ENCODE measurements at regions of chr12 and their contacts with region 1.

Region 1: GRCh38 chr12:51424662-51425438 is at the start of gene SLC4A8:
- DNase-seq: peak; percentile 82 to 97 (median 94)
- ATAC-seq: peak; percentile 99
- H3K4me3 ChIP-seq: peak within 1 kb of the TSS; percentile 16; the same call in 1 of the 2 replicates
- H3K27ac ChIP-seq: no peak within 1 kb of the TSS
- H3K4me1 ChIP-seq: peaks cover 0 to 9% of the 10 kb centered on the region in 2 experiments; a peak in 2 of 5 replicates
- H3K27me3 ChIP-seq: peaks cover 13 to 17% of the 10 kb centered on the region in 2 experiments; a peak in 4 of 5 replicates
- CTCF ChIP-seq: peak; percentile 66 to 81 (median 79)
- EP300 ChIP-seq: no peak
- POLR2A ChIP-seq: no peak
- RAD21 ChIP-seq: peak; percentile 53 to 70
- polyA plus RNA-seq, gene SLC4A8: 0.06 TPM in 1 of 2 experiments, not detected in the other

Region 2: GRCh38 chr12:51118706-51119105 is 306.1 kb before region 1 on chr12:
- CTCF ChIA-PET with region 1: no interaction called
- POLR2A ChIA-PET with region 1: no interaction called
- in situ Hi-C with region 1: no loop called
- intact Hi-C with region 1: no loop called
- DNase-seq: no peak
- ATAC-seq: no peak
- H3K4me3 ChIP-seq: no peak overlapping the region
- H3K27ac ChIP-seq: no peak overlapping the region
- H3K4me1 ChIP-seq: no peaks in the 10 kb centered on the region
- H3K27me3 ChIP-seq: no peaks in the 10 kb centered on the region
- CTCF ChIP-seq: no peak
- EP300 ChIP-seq: no peak
- POLR2A ChIP-seq: no peak
- RAD21 ChIP-seq: no peak

Region 3: GRCh38 chr12:51368640-51369517 is 56.0 kb before region 1 on chr12:
- CTCF ChIA-PET with region 1: no interaction called
- POLR2A ChIA-PET with region 1: no interaction called
- in situ Hi-C with region 1: no loop called
- intact Hi-C with region 1: no loop called
- DNase-seq: peak; percentile 80 to 87 (median 82)
- ATAC-seq: peak; percentile 90
- H3K4me3 ChIP-seq: no peak overlapping the region
- H3K27ac ChIP-seq: no peak overlapping the region
- H3K4me1 ChIP-seq: peaks cover 12 to 20% of the 10 kb centered on the region in 2 experiments
- H3K27me3 ChIP-seq: no peaks in the 10 kb centered on the region
- CTCF ChIP-seq: no peak
- EP300 ChIP-seq: peak; percentile 74
- POLR2A ChIP-seq: no peak
- RAD21 ChIP-seq: no peak; a peak in 1 of 4 replicates

Region 4: DNA sequence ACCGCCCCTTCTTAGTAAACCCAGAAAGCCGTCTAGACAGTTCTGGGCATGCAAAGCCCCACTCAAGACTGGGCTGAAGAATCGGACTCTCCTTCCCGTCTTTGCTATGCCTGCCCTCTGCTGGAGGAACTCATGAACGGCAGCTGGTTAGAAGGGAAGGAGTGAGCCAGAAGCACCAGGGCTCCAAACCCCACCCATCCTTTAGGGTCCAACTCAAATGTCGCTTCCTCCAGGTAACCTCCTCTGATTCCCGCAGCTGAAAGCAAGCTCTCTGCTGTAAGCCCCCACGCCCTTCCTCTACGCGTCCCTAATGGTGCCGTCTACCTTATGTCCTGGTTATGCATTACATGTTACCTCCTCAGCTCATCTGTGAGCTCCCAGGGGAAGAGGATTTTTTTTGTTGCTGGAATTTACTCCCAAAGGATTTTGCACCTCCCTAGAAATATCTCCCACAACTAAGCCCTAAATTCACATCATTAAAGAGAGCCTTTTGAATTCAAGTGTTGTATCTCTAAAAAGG is 107.2 kb after region 1 on chr12:
- CTCF ChIA-PET with region 1: interaction called, 19 read pairs
- POLR2A ChIA-PET with region 1: interaction called, 4 read pairs
- in situ Hi-C with region 1: no loop called
- intact Hi-C with region 1: loop called (anchors 1 kb)
- DNase-seq: peak; percentile 75 to 80 (median 80)
- ATAC-seq: peak; percentile 97
- H3K4me3 ChIP-seq: no peak overlapping the region
- H3K27ac ChIP-seq: no peak overlapping the region
- H3K4me1 ChIP-seq: no peaks in the 10 kb centered on the region
- H3K27me3 ChIP-seq: peaks cover 5 to 36% of the 10 kb centered on the region in 2 experiments; a peak in 3 of 5 replicates
- CTCF ChIP-seq: peak; percentile 85 to 88 (median 85)
- EP300 ChIP-seq: no peak
- POLR2A ChIP-seq: no peak
- RAD21 ChIP-seq: peak; percentile 69 to 84

Region 5: GRCh38 chr12:51678086-51678724 is 253.4 kb after region 1 on chr12:
- CTCF ChIA-PET with region 1: interaction called, 3 read pairs
- POLR2A ChIA-PET with region 1: interaction called, 3 read pairs
- in situ Hi-C with region 1: no loop called
- intact Hi-C with region 1: loop called (anchors 2 kb)
- DNase-seq: peak; percentile 52 to 66 (median 59)
- ATAC-seq: peak; percentile 96
- H3K4me3 ChIP-seq: no peak overlapping the region
- H3K27ac ChIP-seq: no peak overlapping the region
- H3K4me1 ChIP-seq: no peaks in the 10 kb centered on the region
- H3K27me3 ChIP-seq: peaks cover 0 to 7% of the 10 kb centered on the region in 2 experiments; a peak in 2 of 5 replicates
- CTCF ChIP-seq: peak; percentile 73 to 79 (median 76)
- EP300 ChIP-seq: no peak
- POLR2A ChIP-seq: no peak
- RAD21 ChIP-seq: peak; percentile 31 to 68; a peak in 3 of 4 replicates

Region 6: DNA sequence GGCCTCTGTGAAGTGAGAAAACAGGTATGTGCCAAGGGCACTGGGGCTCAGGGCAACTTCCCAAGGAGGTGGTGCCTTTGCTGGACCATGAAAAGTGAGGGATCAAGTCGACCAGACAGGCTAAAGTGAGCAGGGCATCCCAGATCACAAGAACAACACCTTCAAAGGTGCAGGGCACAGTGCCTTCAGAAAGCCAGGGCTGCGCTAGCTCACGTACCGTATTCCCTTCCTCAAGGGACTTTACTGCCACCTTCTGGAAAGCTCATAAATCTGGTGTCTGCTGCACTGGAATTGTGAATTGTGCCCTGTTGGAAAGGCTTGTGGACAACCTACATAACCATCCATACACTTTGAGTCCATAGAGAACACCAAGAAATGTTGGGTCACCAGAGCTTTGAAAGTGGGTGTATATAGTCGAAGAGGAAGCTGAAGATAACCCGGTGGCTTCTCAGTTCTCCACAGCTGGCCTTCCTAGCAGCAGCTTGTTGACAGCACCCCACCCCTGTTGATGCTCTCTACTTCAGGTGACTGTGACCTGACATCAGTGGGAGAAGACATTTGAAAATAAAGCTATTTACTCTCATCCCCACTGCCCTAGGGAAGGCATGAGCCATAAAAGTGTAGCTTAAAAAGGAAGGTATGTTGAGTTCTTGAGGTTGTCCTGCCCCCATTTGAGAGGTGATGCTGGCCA is 399.2 kb after region 1 on chr12:
- CTCF ChIA-PET with region 1: interaction called, 6 read pairs
- POLR2A ChIA-PET with region 1: no interaction called
- in situ Hi-C with region 1: no loop called
- intact Hi-C with region 1: loop called (anchors 5 kb)
- DNase-seq: peak in 2 of 4 experiments; percentile 48 to 69
- ATAC-seq: peak; percentile 86
- H3K4me3 ChIP-seq: no peak overlapping the region
- H3K27ac ChIP-seq: no peak overlapping the region
- H3K4me1 ChIP-seq: peaks cover 12 to 23% of the 10 kb centered on the region in 2 experiments; a peak in 4 of 5 replicates
- H3K27me3 ChIP-seq: peaks cover 5 to 57% of the 10 kb centered on the region in 2 experiments; a peak in 4 of 5 replicates
- CTCF ChIP-seq: peak; percentile 70 to 76 (median 74)
- EP300 ChIP-seq: no peak
- POLR2A ChIP-seq: no peak
- RAD21 ChIP-seq: peak; percentile 43 to 69

Region 7: GRCh38 chr12:51871126-51871525 is 446.3 kb after region 1 on chr12:
- CTCF ChIA-PET with region 1: interaction called, 5 read pairs
- POLR2A ChIA-PET with region 1: no interaction called
- in situ Hi-C with region 1: loop called (anchors 5 kb)
- intact Hi-C with region 1: loop called (anchors 2 kb)
- DNase-seq: no peak
- ATAC-seq: no peak
- H3K4me3 ChIP-seq: no peak overlapping the region
- H3K27ac ChIP-seq: no peak overlapping the region
- H3K4me1 ChIP-seq: peaks cover 7 to 22% of the 10 kb centered on the region in 2 experiments; a peak in 4 of 5 replicates
- H3K27me3 ChIP-seq: peaks cover 29 to 63% of the 10 kb centered on the region in 2 experiments
- CTCF ChIP-seq: 0 out of 6 replicates have a peak, but pooled peaks of 2 of the 3 experiments have one; percentile 3 to 17
- EP300 ChIP-seq: no peak
- POLR2A ChIP-seq: no peak
- RAD21 ChIP-seq: no peak

Measured in K562 (cell line).